MCF 10A (cell line): ENCODE measurements at regions of chr4 and their contacts with region 1.

Region 1: GRCh38 chr4:78775303-78776030 is 683 bp upstream of the BMP2K start:
- DNase-seq: peak; percentile 80
- H3K4me3 Mint-ChIP-seq: peak overlapping the region; percentile 94
- H3K27ac Mint-ChIP-seq: peak overlapping the region; percentile 96
- H3K4me1 Mint-ChIP-seq: no peaks in the 10 kb centered on the region
- H3K27me3 Mint-ChIP-seq: no peaks in the 10 kb centered on the region
- CTCF ChIP-seq: no peak

Region 2: GRCh38 chr4:78534286-78534955 is 241.0 kb before region 1 on chr4:
- CTCF ChIA-PET with region 1: no interaction called
- POLR2A ChIA-PET with region 1: no interaction called
- intact Hi-C with region 1: no loop called
- DNase-seq: peak; percentile 71
- H3K4me3 Mint-ChIP-seq: no peak overlapping the region
- H3K27ac Mint-ChIP-seq: peak overlapping the region; percentile 78
- H3K4me1 Mint-ChIP-seq: peaks cover 35% of the 10 kb centered on the region
- H3K27me3 Mint-ChIP-seq: no peaks in the 10 kb centered on the region
- CTCF ChIP-seq: no peak

Region 3: DNA sequence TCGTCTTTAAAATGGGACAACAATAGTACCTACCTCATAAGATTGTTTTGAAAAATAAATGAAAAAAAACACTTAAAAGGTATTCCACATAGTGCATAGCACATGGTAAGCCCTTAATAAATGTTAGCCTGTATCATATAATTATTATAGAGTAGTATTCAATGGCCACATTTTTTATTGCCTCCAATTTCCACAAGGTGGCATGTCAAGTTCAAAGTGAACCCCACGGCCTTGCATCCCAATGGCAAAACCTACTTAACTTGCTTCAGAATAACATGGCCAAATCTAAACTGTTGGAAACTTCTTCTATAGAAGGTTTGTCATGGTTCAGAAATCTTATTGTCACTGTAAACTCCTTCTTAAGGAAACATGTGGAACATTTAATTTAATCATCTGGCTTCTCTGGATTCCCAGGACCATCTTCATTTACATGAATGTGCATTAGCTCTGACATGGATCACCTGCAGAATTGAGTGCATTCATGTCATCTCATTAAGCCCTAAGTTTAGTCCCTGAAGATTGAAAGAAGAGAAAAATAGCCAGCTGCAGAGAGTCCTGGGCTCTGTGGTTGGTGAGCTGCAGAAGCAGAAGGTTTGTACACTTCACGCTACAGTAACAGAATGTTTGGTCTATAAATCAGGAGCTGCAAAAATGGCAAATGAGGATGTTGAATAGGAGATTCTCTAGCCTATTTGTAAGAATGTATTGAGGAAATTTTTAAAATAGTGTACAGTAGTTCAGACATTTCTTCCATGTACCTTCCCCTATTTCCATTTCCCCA is 162.9 kb before region 1 on chr4:
- CTCF ChIA-PET with region 1: interaction called, 6 read pairs
- POLR2A ChIA-PET with region 1: no interaction called
- intact Hi-C with region 1: loop called (anchors 1 kb)
- DNase-seq: peak; percentile 68
- H3K4me3 Mint-ChIP-seq: no peak overlapping the region
- H3K27ac Mint-ChIP-seq: no peak overlapping the region
- H3K4me1 Mint-ChIP-seq: no peaks in the 10 kb centered on the region
- H3K27me3 Mint-ChIP-seq: no peaks in the 10 kb centered on the region
- CTCF ChIP-seq: peak; percentile 56

Region 4: DNA sequence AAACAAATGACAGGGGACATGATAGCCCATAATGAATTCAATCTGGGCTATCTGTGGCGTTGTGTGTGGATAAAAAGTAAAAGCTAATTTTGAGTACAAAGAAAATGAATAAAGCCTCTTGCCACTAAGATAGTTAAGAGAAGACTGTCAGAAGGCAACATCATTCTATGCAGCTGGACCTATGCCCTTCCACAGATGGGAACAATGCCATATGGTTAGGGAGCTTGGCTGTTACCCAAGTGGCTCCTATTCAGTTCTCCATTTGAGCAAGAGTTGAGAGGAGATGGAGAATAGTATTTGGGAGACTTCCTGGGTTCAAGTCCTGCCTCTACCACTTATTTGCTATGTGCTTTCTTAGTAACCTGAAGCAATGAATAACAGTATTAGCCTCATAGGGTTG is 116.2 kb before region 1 on chr4:
- CTCF ChIA-PET with region 1: no interaction called
- POLR2A ChIA-PET with region 1: no interaction called
- intact Hi-C with region 1: no loop called
- DNase-seq: peak; percentile 68
- H3K4me3 Mint-ChIP-seq: no peak overlapping the region
- H3K27ac Mint-ChIP-seq: no peak overlapping the region
- H3K4me1 Mint-ChIP-seq: peaks cover 35% of the 10 kb centered on the region
- H3K27me3 Mint-ChIP-seq: no peaks in the 10 kb centered on the region
- CTCF ChIP-seq: no peak

Region 5: GRCh38 chr4:78799551-78800495 is 24.4 kb after region 1 on chr4:
- CTCF ChIA-PET with region 1: interaction called, 6 read pairs
- POLR2A ChIA-PET with region 1: interaction called, 42 read pairs
- intact Hi-C with region 1: no loop called
- DNase-seq: peak; percentile 22
- H3K4me3 Mint-ChIP-seq: no peak overlapping the region
- H3K27ac Mint-ChIP-seq: peak overlapping the region; percentile 44
- H3K4me1 Mint-ChIP-seq: peaks cover 17% of the 10 kb centered on the region
- H3K27me3 Mint-ChIP-seq: no peaks in the 10 kb centered on the region
- CTCF ChIP-seq: no peak

Region 6: DNA sequence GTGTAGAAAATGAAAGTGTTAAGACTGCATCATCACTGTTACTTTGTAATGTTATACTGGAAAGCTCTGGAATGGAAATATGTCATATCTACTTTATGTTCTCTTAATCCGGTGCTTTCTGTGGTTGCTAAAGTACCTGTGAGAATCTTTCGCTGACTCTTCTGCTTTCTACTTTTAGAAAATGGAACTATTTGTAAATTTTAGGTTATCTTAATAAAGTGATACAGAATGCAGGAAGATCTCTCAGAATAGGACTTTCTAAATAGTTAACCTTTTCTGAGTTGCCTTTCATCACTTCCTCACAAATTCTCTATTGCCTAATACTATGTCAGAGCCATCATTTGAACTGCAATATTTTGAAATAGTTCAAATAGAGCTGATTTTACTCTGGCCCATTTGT is 70.0 kb after region 1 on chr4:
- CTCF ChIA-PET with region 1: no interaction called
- POLR2A ChIA-PET with region 1: interaction called, 4 read pairs
- intact Hi-C with region 1: loop called (anchors 5 kb)
- DNase-seq: no peak
- H3K4me3 Mint-ChIP-seq: no peak overlapping the region
- H3K27ac Mint-ChIP-seq: no peak overlapping the region
- H3K4me1 Mint-ChIP-seq: no peaks in the 10 kb centered on the region
- H3K27me3 Mint-ChIP-seq: no peaks in the 10 kb centered on the region
- CTCF ChIP-seq: no peak